ENCODE measurements at regions of chr2 and their contacts with region 1.

Region 1: DNA sequence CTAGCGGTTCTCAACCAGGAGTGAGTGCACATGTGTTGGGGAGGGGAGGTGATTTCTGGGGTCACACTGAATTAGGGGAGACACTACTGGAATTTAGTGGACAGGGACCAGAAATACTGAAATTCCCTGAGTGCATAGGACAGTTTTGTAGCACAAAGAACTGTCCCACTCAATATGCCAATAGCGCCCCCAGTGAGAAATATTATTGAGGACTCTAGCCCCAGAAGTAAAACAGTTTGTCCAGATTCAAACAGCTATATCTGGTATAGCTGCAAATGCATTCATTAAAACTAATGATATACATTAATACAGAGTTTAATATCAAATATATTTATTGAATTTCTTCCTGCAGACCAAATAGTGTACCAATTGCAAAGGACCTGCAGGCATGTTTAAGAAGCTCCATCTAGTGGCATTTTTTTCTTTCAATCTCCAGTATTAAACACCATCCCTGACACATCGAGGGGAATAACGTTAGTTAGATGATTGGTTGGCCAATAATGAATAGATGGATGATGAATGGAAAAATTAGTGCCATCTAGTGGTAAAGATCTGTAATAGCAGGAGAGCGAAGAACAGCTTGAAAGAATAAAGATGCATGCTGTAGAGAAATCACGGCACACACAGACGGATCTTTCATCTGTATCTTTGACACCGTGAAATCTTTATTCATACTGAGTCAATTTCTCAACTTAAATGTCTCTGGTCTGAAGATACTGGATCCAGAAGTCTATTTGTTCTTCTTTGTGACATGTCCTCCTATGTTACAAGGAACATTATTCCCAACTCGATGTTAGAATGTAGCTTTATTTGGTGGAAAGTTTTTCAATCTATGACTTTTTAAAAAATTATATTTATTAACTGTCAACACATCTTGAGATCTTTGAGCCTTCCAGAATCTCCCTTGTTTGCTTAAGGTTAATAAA is 62.5 kb downstream of the DHRS9 start:
- DNase-seq: no peak
- H3K4me3 Mint-ChIP-seq: no peak overlapping the region
- H3K27ac Mint-ChIP-seq: no peak overlapping the region
- H3K4me1 Mint-ChIP-seq: no peaks in the 10 kb centered on the region
- H3K27me3 Mint-ChIP-seq: no peaks in the 10 kb centered on the region

Region 2: DNA sequence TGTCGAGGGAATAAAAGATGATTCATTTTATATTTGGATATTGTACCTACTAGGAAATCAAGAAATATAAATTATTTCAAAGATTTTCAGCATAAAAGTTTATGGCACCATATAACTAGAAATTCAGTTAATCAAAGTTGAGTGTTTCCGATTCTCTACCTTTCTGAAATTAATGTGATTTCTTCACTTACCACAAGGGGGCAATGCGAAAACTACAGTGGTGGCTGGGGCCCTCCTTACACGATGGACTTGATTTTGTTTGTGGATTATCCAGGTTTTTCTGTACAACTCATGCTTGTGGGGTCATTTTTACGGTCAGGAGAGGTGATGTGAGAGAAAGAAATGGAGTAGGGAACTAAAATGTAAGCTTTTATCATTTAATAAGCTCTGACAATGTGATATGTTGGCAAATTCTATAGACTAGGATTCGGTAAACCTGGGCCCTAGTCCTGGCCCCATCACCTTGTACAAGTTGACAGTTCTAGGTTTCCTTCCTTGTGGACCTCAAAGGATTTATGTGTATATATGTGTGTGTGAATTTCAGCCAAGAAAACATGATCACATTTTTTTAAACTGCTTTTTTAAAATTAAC is 183.1 kb before region 1 on chr2:
- CTCF ChIA-PET with region 1: interaction called, 6 read pairs
- POLR2A ChIA-PET with region 1: no interaction called
- intact Hi-C with region 1: loop called (anchors 1 kb)
- DNase-seq: peak; percentile 10
- H3K4me3 Mint-ChIP-seq: no peak overlapping the region
- H3K27ac Mint-ChIP-seq: no peak overlapping the region
- H3K4me1 Mint-ChIP-seq: no peaks in the 10 kb centered on the region
- H3K27me3 Mint-ChIP-seq: peaks cover 3% of the 10 kb centered on the region

Region 3: GRCh38 chr2:168961450-168962229 is 170.2 kb before region 1 on chr2:
- CTCF ChIA-PET with region 1: interaction called, 62 read pairs
- POLR2A ChIA-PET with region 1: no interaction called
- intact Hi-C with region 1: loop called (anchors 1 kb)
- DNase-seq: no peak
- H3K4me3 Mint-ChIP-seq: no peak overlapping the region
- H3K27ac Mint-ChIP-seq: no peak overlapping the region
- H3K4me1 Mint-ChIP-seq: peaks cover 36% of the 10 kb centered on the region
- H3K27me3 Mint-ChIP-seq: no peaks in the 10 kb centered on the region

Region 4: GRCh38 chr2:168968342-168968741 is 163.5 kb before region 1 on chr2:
- CTCF ChIA-PET with region 1: interaction called, 62 read pairs
- POLR2A ChIA-PET with region 1: no interaction called
- intact Hi-C with region 1: no loop called
- DNase-seq: no peak
- H3K4me3 Mint-ChIP-seq: no peak overlapping the region
- H3K27ac Mint-ChIP-seq: no peak overlapping the region
- H3K4me1 Mint-ChIP-seq: peaks cover 27% of the 10 kb centered on the region
- H3K27me3 Mint-ChIP-seq: no peaks in the 10 kb centered on the region

Region 5: DNA sequence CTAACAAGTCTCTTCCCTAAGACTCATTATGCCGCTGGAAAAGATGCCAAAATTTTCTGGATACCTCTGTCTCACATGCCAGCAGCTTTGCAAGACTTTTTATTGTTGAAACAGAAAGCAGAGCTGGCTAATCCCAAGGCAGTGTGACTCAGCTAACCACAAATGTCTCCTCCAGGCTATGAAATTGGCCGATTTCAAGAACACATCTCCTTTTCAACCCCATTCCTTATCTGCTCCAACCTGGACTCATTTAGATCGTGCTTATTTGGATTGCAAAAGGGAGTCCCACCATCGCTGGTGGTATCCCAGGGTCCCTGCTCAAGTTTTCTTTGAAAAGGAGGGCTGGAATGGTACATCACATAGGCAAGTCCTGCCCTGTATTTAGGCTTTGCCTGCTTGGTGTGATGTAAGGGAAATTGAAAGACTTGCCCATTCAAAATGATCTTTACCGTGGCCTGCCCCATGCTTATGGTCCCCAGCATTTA is 36.2 kb before region 1 on chr2:
- CTCF ChIA-PET with region 1: interaction called, 11 read pairs
- POLR2A ChIA-PET with region 1: no interaction called
- intact Hi-C with region 1: no loop called
- DNase-seq: peak; percentile 31
- H3K4me3 Mint-ChIP-seq: no peak overlapping the region
- H3K27ac Mint-ChIP-seq: no peak overlapping the region
- H3K4me1 Mint-ChIP-seq: peaks cover 18% of the 10 kb centered on the region
- H3K27me3 Mint-ChIP-seq: no peaks in the 10 kb centered on the region

Region 6: DNA sequence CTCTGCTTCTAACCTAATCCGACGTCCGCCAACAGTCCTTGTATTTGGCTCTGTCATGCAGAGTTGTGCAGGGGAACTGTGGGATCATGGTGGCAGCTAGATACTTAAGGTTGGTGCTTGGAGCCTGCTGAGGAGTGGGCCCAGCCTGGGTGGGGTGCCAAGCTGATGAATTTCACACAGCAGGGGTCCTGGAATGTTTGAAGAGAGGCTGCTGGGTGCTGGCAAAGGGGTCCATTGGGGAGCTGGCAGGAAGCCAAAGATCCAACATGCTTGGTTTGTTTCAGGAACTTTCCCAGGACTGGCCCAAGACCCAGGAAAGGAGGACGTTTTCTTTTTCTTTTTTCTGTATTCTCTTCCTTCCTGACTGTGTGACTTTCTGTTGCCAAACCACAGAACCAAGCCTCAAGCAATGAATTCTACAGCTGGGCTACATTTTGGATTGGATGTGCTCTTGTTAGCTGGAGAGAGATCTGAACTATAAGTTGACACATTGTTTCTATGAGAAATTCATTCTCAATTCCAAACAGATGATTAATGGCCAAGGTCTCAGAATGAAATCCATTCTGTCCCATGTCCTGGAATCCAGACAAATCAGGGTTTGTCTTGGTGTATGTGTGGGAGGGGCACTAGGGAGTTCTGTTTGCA is 12.6 kb before region 1 on chr2:
- CTCF ChIA-PET with region 1: interaction called, 21 read pairs
- POLR2A ChIA-PET with region 1: no interaction called
- intact Hi-C with region 1: no loop called
- DNase-seq: no peak
- H3K4me3 Mint-ChIP-seq: no peak overlapping the region
- H3K27ac Mint-ChIP-seq: no peak overlapping the region
- H3K4me1 Mint-ChIP-seq: no peaks in the 10 kb centered on the region
- H3K27me3 Mint-ChIP-seq: peaks cover 3% of the 10 kb centered on the region

Measured in activated CD4-positive, alpha-beta memory T cell treated with anti-CD3 and anti-CD28 coated beads for 36 hours (primary cell).